ENCODE measurements at regions of chr1 and their contacts with region 1.

Region 1: GRCh38 chr1:75220072-75220471 is 85.9 kb downstream of the LHX8 start:
- DNase-seq: no peak
- H3K4me3 ChIP-seq: no peak overlapping the region
- H3K27ac ChIP-seq: no peak overlapping the region
- H3K27me3 ChIP-seq: no peaks in the 10 kb centered on the region
- CTCF ChIP-seq: no peak

Region 2: GRCh38 chr1:75233302-75233929 is 13.3 kb after region 1 on chr1:
- CTCF ChIA-PET with region 1: interaction called, 16 read pairs
- POLR2A ChIA-PET with region 1: no interaction called
- DNase-seq: no peak
- H3K4me3 ChIP-seq: no peak overlapping the region
- H3K27ac ChIP-seq: no peak overlapping the region
- H3K27me3 ChIP-seq: no peaks in the 10 kb centered on the region
- CTCF ChIP-seq: peak; percentile 66

Region 3: DNA sequence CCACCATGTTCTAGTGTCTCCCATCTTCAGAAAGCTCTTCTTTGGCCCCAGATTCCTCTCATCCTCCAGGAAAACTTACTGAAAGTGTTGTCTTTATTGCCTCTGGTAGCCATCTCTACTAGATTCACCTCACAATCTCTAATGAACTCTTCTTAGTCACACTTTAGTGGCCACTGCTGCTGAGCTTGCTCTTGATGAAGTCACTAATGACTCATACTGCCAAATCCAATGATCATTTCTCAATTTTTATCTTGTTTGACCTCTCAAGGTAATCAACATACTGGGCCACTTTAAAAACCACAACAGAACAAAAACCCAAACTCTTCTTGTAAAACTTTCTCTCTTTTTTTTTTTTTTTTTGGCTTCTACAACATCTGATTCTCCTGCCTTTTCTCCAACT is 110.6 kb after region 1 on chr1:
- CTCF ChIA-PET with region 1: no interaction called
- POLR2A ChIA-PET with region 1: no interaction called
- DNase-seq: no peak
- H3K4me3 ChIP-seq: no peak overlapping the region
- H3K27ac ChIP-seq: no peak overlapping the region
- H3K27me3 ChIP-seq: no peaks in the 10 kb centered on the region
- CTCF ChIP-seq: no peak

Measured in AG04450 (cell line).